ENCODE measurements at regions of chr20 and their contacts with region 1.

Region 1: DNA sequence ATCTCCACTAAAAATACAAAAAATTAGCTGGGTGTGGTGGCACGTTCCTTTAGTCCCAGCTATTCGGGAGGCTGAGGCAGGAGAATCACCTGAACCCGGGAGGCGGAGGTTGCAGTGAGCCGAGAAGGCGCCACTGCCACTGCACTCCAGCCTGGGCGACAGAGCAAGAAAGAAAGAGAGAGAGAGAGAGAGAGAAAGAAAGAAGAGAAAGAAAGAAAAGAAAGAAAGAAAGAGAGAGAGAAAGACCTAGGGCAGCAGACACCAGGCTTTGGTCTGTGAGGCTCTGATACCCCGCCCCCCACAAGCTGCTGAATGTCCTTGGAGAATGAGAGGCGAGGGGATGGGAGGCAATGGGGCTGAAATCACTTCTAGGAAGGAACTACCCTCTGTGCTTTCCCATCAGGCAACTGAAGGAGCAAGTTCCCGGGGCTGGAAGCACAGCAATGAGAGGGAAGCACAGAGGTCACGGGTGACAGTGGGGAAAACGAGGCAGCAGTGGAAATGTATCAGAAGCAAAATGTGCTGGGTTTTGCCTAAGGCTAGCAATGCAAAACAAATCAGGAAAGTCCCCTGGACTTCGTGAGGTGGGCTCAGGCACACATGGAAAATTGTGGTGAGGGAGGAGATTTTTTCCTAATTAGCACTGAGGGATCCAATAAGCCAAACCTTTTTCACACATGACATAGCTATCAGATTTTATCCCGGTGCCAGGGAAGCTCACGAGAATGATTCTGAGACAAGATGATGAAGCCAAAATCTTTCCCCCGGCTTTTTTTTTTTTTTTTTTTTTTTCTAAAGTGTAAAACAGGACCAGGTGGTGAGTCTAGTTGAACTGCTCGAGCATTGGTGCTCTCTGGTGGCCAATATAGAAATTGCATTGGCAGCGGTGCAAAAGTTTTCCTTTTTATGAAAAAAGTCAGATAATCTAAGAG is 16.9 kb upstream of the ARFGEF2 start:
- DNase-seq: peak in 2 of 5 donors; percentile 26 to 39
- ATAC-seq: peak in 3 of 4 donors; percentile 48 to 52 (median 50)
- H3K4me3 ChIP-seq: no peak overlapping the region
- H3K27ac ChIP-seq: no peak overlapping the region
- H3K4me1 ChIP-seq: peaks cover 0 to 27% (median 4%) of the 10 kb centered on the region in 12 donors
- H3K27me3 ChIP-seq: no peaks in the 10 kb centered on the region
- CTCF ChIP-seq: peak; percentile 81 to 90 (median 84)
- POLR2A ChIP-seq: no peak

Region 2: GRCh38 chr20:48635433-48636310 is 269.0 kb before region 1 on chr20:
- intact Hi-C with region 1: loop called in 1 of 10 experiments (anchors 5 kb)
- DNase-seq: peak; percentile 37 to 79 (median 48)
- ATAC-seq: peak; percentile 33 to 77 (median 58)
- H3K4me3 ChIP-seq: no peak overlapping the region
- H3K27ac ChIP-seq: no peak overlapping the region
- H3K4me1 ChIP-seq: no peaks in the 10 kb centered on the region
- H3K27me3 ChIP-seq: no peaks in the 10 kb centered on the region
- CTCF ChIP-seq: peak; percentile 57 to 85 (median 72)
- POLR2A ChIP-seq: no peak

Region 3: DNA sequence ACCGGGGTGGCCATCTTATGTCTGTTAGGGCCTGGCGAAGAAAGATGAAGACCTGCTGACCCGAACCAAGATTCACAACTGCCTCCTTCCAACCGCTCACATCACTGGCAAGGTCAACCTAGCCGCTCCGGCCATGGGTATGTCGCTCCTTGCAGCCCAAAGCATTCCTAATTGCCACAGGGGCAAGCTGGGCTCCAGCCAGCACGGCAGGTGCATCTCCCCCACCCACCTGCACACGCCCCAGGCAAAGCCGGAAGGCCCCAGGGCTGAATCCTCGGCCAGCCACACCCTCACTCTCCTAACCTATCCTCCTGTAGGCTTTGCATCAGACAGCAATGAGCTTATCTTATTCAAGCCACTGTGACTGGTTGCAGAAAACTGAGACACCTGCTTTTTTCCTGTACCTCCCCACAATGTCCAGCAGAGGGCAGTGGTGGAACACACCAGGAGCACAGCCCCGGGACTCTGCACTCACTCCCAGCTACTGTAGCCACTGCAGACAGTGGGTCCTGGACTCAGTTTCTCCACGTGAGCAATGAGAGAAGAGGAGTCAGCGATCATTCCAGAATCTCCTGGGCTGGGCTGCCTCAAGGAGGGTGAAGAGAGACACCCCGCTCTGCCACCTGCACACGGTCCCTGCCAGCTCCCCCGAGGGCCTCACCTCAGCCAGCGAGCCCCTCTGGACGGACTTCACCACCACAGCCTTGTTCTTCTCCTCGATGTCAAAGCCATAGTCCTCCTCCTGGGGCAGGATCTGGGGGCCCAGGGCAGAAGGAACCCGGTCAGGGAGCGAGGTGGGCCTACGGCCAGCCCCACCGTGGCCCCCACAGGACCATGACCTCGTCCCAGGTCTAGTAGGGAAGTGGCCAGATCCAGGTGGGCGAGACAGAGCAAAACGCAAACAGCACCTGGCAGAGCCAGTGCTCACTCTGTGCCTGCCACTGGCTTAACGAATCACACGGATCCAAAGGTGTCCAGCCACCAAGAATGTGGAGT is 246.9 kb before region 1 on chr20:
- intact Hi-C with region 1: loop called (anchors 1 to 2 kb)
- DNase-seq: peak in 4 of 5 donors; percentile 64 to 70 (median 68)
- ATAC-seq: peak; percentile 78 to 90 (median 84)
- H3K4me3 ChIP-seq: no peak overlapping the region
- H3K27ac ChIP-seq: no peak overlapping the region
- H3K4me1 ChIP-seq: peaks cover 0 to 8% (median 0%) of the 10 kb centered on the region in 12 donors
- H3K27me3 ChIP-seq: no peaks in the 10 kb centered on the region
- CTCF ChIP-seq: peak; percentile 91 to 99 (median 95)
- POLR2A ChIP-seq: no peak

Region 4: DNA sequence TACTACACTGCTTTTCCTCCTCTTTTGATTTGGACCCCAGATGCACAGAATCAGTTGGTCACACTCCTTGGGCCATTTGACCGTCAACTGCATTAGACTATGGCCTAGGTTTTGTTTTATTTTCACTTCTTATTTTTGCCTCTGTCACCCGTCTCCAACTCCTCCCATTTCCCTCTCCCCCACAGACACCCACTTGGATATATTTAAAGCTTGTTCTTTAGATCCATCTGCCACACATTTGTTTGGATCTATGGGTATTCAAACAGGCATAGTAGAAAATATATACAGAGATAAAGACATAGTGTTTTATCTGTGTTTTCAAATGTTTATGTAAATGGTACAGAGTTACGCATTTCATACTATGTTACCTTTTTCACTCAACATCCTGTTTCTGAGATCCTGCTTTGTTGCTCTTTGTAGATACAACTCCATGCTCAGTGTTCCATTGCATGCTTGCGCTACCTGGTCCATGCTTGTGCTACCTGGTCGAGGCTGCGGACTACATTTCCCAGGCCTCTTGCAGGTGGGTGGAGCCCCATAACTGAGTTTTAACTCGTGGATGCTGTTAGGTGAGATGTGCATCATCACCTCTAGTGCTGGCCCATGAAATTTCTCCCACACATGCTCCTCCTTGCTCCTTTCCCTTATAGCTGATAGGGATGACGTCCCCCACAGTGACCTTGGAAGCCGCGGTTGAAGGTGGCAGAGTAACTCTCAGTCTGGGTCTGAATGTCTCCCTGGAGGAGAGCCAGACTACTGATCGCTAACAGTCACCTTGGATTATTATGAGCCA is 65.3 kb before region 1 on chr20:
- intact Hi-C with region 1: loop called in 2 of 10 experiments (anchors 5 to 10 kb)
- DNase-seq: no peak
- ATAC-seq: no peak
- H3K4me3 ChIP-seq: no peak overlapping the region
- H3K27ac ChIP-seq: peak overlapping the region in 1 of 12 donors; percentile 46
- H3K4me1 ChIP-seq: peaks cover 0 to 14% (median 0%) of the 10 kb centered on the region in 12 donors
- H3K27me3 ChIP-seq: no peaks in the 10 kb centered on the region
- CTCF ChIP-seq: no peak
- POLR2A ChIP-seq: no peak

Region 5: DNA sequence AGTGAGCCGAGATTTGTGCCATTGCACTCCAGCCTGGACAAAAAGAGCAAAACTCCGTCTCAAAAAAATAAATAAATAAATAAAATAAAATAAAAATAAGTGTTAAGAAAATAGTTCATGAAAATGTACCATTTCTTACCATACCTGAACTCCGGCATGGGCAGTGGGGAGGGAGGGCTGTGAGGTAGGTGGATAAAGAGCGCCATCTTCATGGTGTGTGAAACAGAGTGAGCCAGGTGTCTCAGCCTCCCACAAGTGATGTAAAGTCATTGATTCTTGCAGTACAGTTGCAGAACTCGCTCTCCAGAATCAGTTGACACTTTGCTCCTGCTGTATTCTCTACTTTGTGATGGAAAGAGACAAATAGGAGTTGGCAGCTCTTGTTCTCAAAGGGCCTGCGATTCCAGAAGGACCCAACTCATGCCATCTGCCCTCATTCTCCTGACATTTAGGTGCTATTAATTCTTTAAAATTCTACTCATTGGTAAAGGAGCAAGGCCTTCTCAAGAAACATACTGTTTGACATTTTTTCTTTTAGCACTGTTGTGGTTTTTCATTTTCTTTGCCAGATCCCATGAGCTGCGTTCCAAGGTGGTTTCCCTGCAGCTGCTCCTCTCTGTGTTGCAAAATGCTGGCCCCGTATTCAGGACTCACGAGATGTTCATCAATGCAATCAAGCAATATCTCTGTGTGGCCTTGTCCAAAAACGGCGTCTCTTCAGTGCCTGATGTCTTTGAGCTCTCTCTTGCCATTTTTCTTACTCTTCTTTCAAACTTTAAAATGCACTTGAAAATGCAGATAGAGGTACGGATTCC is 66.1 kb after region 1 on chr20:
- intact Hi-C with region 1: no loop called
- DNase-seq: no peak
- ATAC-seq: no peak
- H3K4me3 ChIP-seq: no peak overlapping the region
- H3K27ac ChIP-seq: no peak overlapping the region
- H3K4me1 ChIP-seq: peaks cover 0 to 12% (median 1%) of the 10 kb centered on the region in 12 donors
- H3K27me3 ChIP-seq: no peaks in the 10 kb centered on the region
- CTCF ChIP-seq: no peak
- POLR2A ChIP-seq: no peak

Region 6: GRCh38 chr20:48983423-48984400 is 79.1 kb after region 1 on chr20:
- intact Hi-C with region 1: no loop called
- DNase-seq: peak in 4 of 5 donors; percentile 27 to 58 (median 42)
- ATAC-seq: peak; percentile 83 to 98 (median 98)
- H3K4me3 ChIP-seq: no peak overlapping the region
- H3K27ac ChIP-seq: peak overlapping the region in 11 of 12 donors; percentile 1 to 64 (median 31)
- H3K4me1 ChIP-seq: peaks cover 4 to 30% (median 10%) of the 10 kb centered on the region in 12 donors
- H3K27me3 ChIP-seq: no peaks in the 10 kb centered on the region
- CTCF ChIP-seq: no peak
- POLR2A ChIP-seq: no peak

Measured in heart left ventricle (tissue), 16 donors.